ENCODE measurements at regions of chr3 and their contacts with region 1.

Region 1: GRCh38 chr3:138935848-138936740 is 10.8 kb downstream of the FOXL2 start:
- DNase-seq: peak; percentile 76
- H3K4me3 ChIP-seq: peak overlapping the region; percentile 71
- H3K27ac ChIP-seq: no peak overlapping the region
- H3K4me1 ChIP-seq: 0 out of 2 replicates have a peak, but pooled peaks cover 8% of the 10 kb centered on the region
- H3K27me3 ChIP-seq: peaks cover 35% of the 10 kb centered on the region

Region 2: DNA sequence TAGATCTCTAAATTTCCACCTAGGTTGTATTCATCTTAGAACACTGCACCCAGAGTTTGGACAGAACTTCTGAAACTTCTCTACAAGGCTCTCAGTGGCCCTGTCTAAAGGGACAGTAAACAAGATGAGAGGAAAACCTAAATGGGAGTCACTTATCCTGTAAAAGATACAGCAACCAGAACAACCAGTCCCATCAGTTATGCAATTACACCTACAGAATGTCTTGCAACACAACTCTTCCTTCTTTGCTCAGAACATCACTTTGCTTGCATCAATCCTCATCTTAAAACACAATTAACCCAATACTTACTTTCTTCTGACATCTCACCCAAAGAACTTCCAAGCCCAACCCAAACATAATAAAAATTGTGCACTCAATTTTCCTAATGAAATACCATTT is 1461.2 kb before region 1 on chr3:
- in situ Hi-C with region 1: no loop called
- DNase-seq: no peak
- H3K4me3 ChIP-seq: no peak overlapping the region
- H3K27ac ChIP-seq: no peak overlapping the region
- H3K4me1 ChIP-seq: no peaks in the 10 kb centered on the region
- H3K27me3 ChIP-seq: no peaks in the 10 kb centered on the region

Region 3: DNA sequence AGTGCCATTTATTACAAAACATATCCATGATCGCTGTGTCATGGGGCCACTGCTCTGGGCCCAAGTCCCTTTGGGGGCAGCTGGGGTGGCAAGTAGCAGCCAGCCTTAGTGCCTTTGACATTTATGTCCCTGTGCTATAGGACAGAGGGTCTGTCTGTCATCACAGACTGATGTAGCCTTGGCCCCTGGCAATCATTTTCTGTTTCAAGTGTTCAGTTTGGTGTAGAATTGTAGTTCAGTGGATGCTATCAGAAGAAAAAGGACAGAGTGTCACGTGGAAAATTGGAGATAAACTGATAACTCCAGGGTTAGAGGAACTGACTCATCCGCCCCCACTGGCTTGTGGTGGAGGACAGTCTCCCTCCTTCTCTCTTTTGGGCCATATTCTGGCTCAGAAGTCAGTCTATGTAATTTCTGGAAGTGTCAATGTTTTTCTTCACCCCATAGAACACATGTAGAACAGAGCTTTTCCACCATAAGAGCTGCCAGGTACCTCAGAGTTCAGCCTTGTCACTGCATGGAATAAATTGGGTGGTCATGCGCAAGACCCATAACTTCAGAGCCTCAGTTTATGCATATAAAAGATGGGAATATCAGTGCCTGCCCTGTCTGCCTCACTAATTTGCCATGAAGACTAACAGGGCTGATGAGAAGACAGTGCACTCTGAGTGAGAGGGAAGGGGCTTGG is 403.3 kb after region 1 on chr3:
- in situ Hi-C with region 1: loop called (anchors 10 kb)
- DNase-seq: peak; percentile 40
- H3K4me3 ChIP-seq: no peak overlapping the region
- H3K27ac ChIP-seq: no peak overlapping the region
- H3K4me1 ChIP-seq: peaks cover 8% of the 10 kb centered on the region
- H3K27me3 ChIP-seq: no peaks in the 10 kb centered on the region